Left cardiac atrium (tissue), 4 donors: ENCODE measurements at regions of chr2 and their contacts with region 1.

Region 1: DNA sequence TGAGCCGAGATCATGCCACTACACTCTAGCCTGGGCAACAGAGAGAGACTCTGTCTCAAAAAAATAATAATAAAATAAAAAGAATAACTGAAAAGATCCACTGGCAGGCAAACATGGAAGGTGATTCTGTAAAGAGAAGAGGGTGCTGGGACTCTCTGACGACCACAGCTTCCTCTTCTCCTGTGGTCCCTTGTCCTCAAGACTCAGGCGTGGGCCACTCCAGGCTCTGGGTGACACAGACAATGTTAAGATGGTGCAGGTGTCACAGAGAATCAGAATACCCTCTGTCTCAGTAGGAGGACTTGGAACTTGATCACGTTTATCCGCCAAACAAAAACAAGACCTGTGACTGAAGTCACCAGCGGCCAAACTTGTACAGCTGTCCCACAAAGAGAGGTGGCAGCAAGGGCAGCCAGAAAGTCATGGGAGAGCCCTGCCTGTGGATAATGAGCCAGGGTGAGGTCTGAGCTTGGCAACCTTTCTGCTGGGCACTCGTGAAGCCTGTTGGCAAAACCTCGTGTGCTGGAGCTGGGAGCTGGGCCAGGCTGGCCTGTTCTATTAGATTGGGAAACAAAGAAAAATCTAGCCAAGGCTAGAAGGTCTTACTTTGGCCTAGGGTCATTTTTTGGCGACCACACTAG is 76.4 kb upstream of the ITGA6 start:
- DNase-seq: peak; percentile 68
- ATAC-seq: peak; percentile 94 to 99

Region 2: DNA sequence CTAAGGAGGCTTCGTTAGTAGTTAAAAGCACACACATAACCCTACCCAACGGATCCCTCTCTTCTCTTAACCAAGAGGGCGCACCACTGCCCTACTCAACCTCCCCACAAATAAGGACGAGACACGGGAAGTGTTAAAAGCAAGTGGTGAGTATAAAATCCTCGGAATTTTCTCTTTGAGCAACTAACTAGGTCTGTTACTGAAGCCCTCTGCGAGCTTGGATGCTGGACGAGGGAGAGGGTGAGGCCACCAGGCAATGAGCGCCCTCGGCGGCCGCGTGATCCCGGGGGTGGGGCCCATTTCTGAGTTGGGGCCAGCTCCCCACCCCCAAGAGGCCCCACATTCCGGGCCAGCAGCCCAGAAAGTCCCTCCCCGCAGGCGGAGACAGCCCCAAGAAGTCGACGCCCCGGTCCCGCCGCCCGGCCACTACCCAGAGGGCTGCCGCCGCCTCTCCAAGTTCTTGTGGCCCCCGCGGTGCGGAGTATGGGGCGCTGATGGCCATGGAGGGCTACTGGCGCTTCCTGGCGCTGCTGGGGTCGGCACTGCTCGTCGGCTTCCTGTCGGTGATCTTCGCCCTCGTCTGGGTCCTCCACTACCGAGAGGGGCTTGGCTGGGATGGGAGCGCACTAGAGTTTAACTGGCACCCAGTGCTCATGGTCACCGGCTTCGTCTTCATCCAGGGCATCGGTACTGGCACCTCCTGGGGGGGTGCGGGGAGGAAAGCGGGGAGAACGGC is 828.7 kb before region 1 on chr2 and contains the start of gene CYBRD1:
- intact Hi-C with region 1: no loop called
- DNase-seq: peak; percentile 90
- ATAC-seq: peak; percentile 83 to 90
- total RNA-seq, gene CYBRD1: 85.9 to 110 TPM

Region 3: DNA sequence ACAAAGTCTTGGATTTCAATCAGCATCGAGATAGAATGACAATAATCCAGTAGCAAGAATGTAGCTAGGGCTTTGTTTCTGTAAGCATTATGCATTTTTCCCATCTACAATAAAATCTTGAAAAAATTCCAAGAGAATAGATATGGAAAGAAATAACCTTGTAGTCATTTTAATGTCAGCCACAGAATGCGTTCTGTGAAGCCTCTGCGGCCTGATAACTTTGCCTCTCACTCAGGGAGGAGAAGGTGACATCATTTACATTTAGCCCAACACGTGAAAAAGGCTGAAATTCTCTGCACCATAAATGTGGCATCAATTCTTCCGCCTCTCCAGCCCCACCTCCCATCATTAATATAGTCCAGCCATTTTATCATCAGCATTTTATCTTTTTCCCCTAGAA is 682.8 kb before region 1 on chr2:
- intact Hi-C with region 1: no loop called
- DNase-seq: no peak
- ATAC-seq: no peak

Region 4: DNA sequence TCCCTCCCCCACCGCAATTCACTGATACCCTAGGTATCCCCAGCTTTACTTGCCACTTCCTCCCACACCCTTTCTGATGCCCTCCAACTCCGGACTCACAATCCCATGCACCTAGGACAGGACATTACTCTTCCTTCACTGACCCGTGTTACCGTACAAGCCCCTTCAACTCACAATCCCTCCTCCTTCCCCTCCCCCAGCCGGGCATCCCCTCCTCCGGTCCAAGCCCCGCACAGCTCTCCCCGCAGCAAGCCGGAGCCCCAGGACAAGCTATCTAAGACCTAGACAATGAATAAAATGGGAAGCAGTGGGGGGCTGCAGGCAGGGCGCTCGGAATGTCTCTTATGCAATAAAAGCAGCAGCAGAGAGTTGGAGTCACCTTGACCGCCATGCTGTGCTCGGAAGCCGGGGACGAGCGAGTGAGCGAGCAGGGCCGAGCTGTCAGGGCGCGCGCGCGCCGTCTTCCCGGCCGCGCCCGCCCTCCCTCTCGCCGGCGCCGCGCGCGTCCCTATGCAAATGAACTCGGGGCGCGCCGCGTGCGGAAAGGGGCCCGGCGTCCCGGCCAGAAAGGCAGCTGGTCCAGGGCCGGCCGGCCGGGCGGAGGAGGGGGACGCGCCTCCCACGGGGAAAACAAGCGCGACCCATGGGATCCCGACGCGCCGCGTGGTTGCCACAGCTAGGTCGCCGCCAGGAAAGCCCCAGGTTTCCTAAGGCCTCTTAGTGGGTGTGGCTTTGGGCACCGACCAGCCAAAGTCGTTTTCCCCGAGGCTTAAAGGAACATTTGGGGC is 456.9 kb before region 1 on chr2 and contains the start of gene SLC25A12:
- intact Hi-C with region 1: no loop called
- DNase-seq: peak; percentile 88
- ATAC-seq: peak; percentile 99
- total RNA-seq, gene SLC25A12: 65.6 to 101 TPM

Region 5: GRCh38 chr2:172416447-172417058 is 65.6 kb after region 1 on chr2:
- intact Hi-C with region 1: loop called in 1 of 2 experiments (anchors 5 kb)
- DNase-seq: no peak
- ATAC-seq: no peak